Calu3 (cell line): ENCODE measurements at regions of chr2 and their contacts with region 1.

Region 1: DNA sequence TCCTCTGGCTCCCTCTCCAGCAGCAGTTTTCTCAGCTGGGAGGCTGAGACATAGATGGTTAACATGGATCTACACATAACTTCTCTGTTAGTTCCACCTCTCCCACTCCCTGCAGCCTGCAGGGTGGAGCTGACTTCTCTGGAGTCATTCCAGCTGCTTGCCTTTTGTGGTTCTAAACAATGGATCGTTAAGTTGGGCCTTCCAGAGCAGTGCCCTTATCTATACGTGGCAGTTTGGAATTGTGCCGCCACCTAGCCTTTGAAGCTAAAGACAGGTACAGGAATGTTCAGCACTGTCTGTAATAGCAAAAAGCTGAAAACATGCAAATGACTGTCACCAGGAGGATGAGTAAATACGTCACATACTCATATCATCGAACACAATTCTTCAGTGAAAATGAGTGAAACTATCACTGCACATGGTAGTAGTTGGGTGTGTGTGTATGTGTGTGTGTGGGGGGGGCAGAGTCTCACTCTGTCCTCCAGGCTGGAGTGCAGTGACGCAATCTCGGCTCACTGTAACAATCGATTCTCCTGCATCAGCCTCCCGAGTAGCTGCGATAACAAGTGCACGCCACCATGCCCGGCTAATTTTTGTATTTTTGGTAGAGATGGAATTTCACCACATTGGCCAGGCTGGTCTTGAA is 50.3 kb downstream of the SH2D6 start:
- DNase-seq: peak; percentile 72
- H3K4me3 Mint-ChIP-seq: no peak overlapping the region
- H3K27ac Mint-ChIP-seq: peak overlapping the region; percentile 61
- H3K4me1 Mint-ChIP-seq: peaks cover 30% of the 10 kb centered on the region
- H3K27me3 Mint-ChIP-seq: no peaks in the 10 kb centered on the region
- CTCF ChIP-seq: no peak

Region 2: DNA sequence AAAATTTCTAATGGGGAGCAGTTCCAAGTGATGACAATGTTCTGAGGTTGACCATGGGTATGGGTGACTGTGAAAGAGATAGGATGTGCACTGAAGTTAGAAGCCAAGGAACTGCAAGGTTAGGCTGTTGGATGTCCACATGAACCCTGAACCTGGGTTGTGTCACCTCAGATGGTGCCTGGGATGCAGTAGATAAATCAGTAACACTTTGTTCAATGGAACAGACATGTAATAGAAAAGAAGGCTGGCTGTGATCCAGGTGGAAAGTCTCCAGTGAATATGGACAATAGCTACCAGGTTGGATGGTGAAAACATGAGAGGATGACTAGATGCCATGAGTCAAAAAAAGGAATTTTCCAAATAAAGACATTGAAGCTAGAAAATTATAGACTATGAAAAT is 719.4 kb before region 1 on chr2:
- CTCF ChIA-PET with region 1: no interaction called
- intact Hi-C with region 1: no loop called
- DNase-seq: no peak
- H3K4me3 Mint-ChIP-seq: no peak overlapping the region
- H3K27ac Mint-ChIP-seq: no peak overlapping the region
- H3K4me1 Mint-ChIP-seq: no peaks in the 10 kb centered on the region
- H3K27me3 Mint-ChIP-seq: peaks cover 44% of the 10 kb centered on the region
- CTCF ChIP-seq: no peak

Region 3: GRCh38 chr2:85455552-85456090 is 13.2 kb before region 1 on chr2:
- CTCF ChIA-PET with region 1: interaction called, 10 read pairs
- intact Hi-C with region 1: no loop called
- DNase-seq: no peak
- H3K4me3 Mint-ChIP-seq: no peak overlapping the region
- H3K27ac Mint-ChIP-seq: no peak overlapping the region
- H3K4me1 Mint-ChIP-seq: peaks cover 47% of the 10 kb centered on the region
- H3K27me3 Mint-ChIP-seq: no peaks in the 10 kb centered on the region
- CTCF ChIP-seq: no peak

Region 4: DNA sequence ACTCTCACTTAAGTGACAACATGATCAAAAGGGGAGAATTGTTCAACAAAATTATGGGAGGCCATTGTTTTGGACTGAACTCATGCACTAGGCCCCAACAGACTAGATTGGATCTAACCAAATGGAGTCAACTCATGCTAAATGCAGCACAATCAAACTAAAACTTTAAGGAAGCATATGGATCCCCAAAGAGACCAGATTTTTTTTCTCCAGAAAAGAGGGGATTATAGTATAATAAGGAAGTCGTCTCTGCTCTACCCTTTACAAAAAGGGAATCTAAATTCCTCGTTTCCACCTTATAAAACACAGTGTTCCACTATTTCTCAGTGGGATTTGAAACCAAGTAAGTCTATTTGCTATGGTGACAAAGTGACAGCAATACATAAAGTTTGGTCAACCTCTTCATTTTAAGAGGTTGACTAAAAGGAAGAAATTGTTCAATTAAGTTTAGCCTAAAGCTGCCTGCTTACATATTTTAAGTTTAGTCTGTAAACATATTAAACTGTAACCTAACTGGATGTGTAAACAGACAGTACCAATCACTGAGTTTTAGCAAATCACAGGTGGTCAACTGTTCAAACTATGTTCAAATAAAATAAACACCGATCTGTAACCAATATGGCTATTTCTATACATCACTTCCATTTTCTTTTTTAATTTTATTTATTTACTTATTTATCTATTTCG is 29.3 kb after region 1 on chr2:
- CTCF ChIA-PET with region 1: interaction called, 4 read pairs
- intact Hi-C with region 1: loop called (anchors 2 kb)
- DNase-seq: no peak
- H3K4me3 Mint-ChIP-seq: no peak overlapping the region
- H3K27ac Mint-ChIP-seq: no peak overlapping the region
- H3K4me1 Mint-ChIP-seq: peaks cover 26% of the 10 kb centered on the region
- H3K27me3 Mint-ChIP-seq: no peaks in the 10 kb centered on the region
- CTCF ChIP-seq: no peak

Region 5: DNA sequence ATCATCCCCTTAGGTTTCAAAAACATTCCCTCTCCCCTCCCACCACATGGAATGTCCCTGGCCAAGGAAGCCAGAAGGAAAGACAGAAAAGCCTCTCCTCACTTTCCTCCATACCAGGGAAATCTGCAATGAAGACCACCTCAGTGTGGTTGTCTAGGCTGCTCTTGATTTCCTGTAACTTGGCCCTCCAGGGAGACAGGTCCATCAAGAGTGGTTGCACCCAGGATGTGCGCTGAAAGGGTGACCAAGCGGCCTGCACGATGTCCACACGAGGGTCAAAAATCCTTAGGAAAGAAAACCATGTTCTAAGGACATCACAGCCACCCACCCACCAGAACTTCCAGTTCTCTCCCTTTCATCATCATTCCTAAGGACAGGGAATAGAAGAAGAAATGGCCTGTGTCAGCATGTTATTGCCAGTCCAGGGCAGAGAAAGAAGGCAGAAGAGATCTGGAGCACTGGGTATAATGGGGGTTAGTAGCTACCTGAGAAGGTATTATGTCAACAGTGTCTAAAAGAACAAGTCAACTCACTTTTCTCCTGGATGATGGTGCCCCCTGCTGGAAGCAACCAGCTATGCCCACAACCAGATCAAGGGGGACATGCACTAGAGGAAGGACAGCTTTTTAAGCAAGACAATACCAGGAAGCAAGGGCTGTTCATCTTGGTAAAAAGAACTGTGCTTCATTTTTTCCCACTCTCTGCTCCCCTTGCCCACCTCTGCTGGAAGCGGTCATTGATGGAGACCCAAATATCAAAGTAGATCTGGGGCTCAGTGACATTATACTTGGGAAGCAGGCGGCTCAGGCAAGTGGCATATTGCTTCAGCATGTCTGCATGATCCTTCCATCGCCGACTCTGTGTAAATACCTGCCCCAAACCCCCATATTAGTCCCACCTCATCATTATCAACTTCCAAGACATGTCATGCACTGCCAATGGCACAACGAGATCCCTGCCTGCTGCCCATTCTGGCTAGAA is 83.2 kb after region 1 on chr2:
- CTCF ChIA-PET with region 1: no interaction called
- intact Hi-C with region 1: no loop called
- DNase-seq: peak; percentile 87
- H3K4me3 Mint-ChIP-seq: no peak overlapping the region
- H3K27ac Mint-ChIP-seq: no peak overlapping the region
- H3K4me1 Mint-ChIP-seq: peaks cover 10% of the 10 kb centered on the region
- H3K27me3 Mint-ChIP-seq: no peaks in the 10 kb centered on the region
- CTCF ChIP-seq: peak; percentile 77

Region 6: GRCh38 chr2:85570297-85570696 is 101.5 kb after region 1 on chr2:
- CTCF ChIA-PET with region 1: no interaction called
- intact Hi-C with region 1: no loop called
- DNase-seq: no peak
- H3K4me3 Mint-ChIP-seq: no peak overlapping the region
- H3K27ac Mint-ChIP-seq: no peak overlapping the region
- H3K4me1 Mint-ChIP-seq: peaks cover 8% of the 10 kb centered on the region
- H3K27me3 Mint-ChIP-seq: peaks cover 37% of the 10 kb centered on the region
- CTCF ChIP-seq: no peak